ENCODE measurements at regions of chr10 and their contacts with region 1.

Region 1: DNA sequence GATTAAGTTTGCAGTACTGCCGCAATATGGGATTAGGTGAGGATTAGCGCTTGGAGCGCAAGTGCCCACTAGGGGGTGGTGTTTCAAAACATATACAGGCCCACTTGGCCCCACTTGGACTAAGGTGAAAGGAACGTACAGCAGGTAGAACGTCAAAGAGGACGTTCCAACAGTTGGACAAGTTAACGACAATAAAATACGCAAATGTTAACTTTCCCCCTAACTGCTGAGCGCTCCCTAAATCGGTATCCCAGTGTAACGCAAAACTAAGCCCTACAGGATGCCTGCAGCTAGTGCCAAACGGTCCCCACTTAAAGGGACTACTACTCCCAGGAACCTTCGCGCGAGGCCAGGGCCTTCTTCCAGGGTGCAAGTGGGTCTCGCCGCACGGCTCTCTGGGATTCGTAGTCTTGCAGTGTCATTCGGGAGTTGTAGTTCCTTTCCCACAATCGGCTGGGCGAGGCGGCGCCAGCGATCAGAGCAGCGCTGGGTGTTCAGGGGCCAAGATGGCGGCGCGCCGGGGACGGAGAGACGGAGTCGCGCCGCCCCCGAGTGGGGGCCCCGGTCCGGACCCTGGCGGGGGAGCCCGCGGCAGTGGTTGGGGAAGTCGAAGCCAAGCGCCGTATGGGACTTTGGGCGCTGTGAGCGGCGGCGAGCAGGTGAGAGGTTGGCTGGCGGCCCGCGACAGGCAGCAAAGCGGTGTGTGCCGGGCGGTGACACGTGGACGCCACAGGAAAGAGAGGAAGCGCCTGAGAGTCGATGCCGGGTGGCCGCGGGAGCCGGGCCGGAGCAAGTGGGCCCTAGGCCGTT is at the start of gene PPRC1:
- DNase-seq: peak; percentile 99
- H3K4me3 ChIP-seq: peak within 1 kb of the TSS; percentile 87
- H3K27ac ChIP-seq: peak within 1 kb of the TSS; percentile 65
- H3K4me1 ChIP-seq: peaks cover 44% of the 10 kb centered on the region
- CTCF ChIP-seq: peak; percentile 97
- total RNA-seq, gene PPRC1: 29.8 and 47.1 TPM in 2 replicates

Region 2: DNA sequence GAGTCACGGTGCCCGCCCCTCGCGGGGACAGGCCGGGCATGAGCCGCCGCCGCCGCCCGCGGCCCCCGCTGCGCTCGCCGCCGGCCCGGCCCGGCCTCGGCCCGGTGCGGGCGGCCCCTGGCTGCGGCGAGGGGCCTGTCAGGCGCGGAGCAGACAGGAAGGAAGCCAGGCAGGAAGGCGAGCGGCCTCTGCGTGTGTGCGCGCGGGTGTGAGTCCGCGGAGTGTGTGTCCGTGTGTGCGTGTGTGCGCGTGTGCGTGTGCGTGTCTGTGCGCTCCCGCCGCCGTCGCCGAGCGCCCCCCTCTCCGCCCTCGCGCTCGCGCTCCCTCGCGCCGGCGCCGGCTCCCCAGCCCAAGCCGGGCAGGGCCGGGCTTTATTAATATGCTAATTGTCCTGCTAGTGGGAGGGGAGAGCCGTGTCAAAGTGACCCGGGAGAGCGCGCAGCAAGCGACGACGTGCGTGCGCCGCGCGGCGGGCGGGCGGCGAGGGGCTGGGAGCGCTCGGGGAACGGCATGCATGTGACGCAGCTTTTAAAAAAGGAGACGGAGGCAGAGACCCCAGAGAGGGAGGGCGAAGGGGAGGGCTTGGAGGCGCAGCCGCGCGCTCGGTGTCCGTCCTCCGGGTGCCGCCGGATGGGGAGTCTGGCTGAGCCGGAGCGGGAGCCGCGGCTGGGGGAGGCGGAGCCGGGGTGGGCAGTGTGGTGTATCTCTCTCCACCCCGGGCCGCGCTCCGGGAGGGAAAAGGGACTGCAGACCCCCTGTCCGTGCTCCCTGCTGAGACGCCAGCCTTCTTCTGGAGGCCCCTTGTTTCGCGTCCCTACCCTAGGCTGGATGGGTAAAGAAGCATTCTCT is 12.4 kb before region 1 on chr10 and contains the start of gene LDB1:
- CTCF ChIA-PET with region 1: interaction called, 4 read pairs
- POLR2A ChIA-PET with region 1: interaction called, 11 read pairs
- intact Hi-C with region 1: loop called (anchors 1 kb)
- DNase-seq: peak; percentile 85
- H3K4me3 ChIP-seq: peak within 1 kb of the TSS; percentile 87
- H3K27ac ChIP-seq: peak within 1 kb of the TSS; percentile 80
- H3K4me1 ChIP-seq: peaks cover 49% of the 10 kb centered on the region
- CTCF ChIP-seq: peak; percentile 28; the same call in 1 of the 2 replicates
- total RNA-seq, gene LDB1: 50.8 and 58.6 TPM in 2 replicates

Region 3: DNA sequence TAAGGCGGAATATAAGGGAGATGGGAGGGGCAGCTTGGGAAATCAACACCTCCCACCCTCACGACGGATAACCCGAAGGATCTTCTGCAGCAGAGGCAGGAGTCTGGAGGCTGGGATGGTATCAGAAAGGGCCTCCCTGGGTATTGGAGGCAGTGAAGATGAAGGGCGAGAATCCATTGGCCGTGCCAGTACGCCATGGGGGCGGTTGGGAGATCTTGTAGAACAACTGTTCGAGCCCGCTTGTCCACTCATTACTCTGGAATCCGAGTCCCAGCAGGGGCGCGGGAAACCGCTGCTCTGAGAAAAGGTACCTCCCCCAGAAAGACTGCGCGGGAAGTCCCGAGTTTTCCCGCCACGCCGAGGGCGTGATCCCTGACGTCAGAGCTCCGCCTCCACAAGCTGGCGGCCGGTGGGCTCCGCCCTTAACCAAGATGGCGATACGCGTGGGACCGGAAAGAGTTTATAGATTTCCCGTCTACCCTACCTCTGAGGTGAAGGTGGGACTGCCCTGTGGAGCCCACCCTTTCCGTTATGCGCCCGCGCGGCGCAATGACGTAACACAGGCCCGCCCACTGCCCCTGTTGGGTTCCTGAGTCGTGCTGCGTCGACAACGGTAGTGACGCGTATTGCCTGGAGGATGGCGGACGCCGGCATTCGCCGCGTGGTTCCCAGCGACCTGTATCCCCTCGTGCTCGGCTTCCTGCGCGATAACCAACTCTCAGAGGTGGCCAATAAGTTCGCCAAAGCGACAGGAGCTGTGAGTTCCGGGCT is 19.2 kb after region 1 on chr10 and contains the start of gene NOLC1:
- CTCF ChIA-PET with region 1: interaction called, 4 read pairs
- POLR2A ChIA-PET with region 1: interaction called, 18 read pairs
- intact Hi-C with region 1: loop called (anchors 1 kb)
- DNase-seq: peak; percentile 99
- H3K4me3 ChIP-seq: peak within 1 kb of the TSS; percentile 88
- H3K27ac ChIP-seq: peak within 1 kb of the TSS; percentile 79
- H3K4me1 ChIP-seq: peaks cover 43% of the 10 kb centered on the region
- CTCF ChIP-seq: no peak
- total RNA-seq, gene NOLC1: 93.5 and 120 TPM in 2 replicates

Region 4: GRCh38 chr10:102220612-102221011 is 87.8 kb after region 1 on chr10:
- CTCF ChIA-PET with region 1: no interaction called
- POLR2A ChIA-PET with region 1: no interaction called
- intact Hi-C with region 1: no loop called
- DNase-seq: no peak
- H3K4me3 ChIP-seq: no peak overlapping the region
- H3K27ac ChIP-seq: no peak overlapping the region
- H3K4me1 ChIP-seq: no peaks in the 10 kb centered on the region
- CTCF ChIP-seq: no peak

Measured in OCI-LY7 (cell line).